MCF 10A (cell line): ENCODE measurements at regions of chr3 and their contacts with region 1.

Region 1: DNA sequence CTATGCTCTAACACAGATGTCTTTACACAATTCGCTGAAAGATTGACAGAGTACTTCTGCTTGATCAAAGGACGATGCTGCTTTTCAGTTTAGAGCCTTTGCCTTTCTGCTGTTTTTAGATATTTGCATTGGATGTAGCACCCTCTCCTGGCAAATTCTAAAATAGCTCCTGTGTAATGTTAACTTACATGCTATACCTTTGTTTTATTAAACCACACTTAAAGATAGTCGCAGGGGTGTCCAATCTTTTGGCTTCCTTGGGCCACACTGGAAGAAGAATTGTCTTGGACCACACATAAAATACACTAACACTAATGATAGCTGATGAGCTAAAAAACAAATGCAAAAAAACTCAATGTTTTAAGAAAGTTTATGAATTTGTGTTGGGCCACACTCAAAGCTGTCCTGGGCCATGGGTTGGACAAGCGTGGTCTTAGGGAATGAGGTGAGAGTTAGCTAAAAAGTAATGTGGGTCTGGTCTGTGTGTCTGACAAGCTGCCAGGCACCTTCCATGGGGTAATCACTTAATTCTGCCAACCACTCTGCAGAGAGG is 62.9 kb downstream of the ATG7 start:
- DNase-seq: peak; percentile 77
- H3K4me3 Mint-ChIP-seq: no peak overlapping the region
- H3K27ac Mint-ChIP-seq: no peak overlapping the region
- H3K4me1 Mint-ChIP-seq: no peaks in the 10 kb centered on the region
- H3K27me3 Mint-ChIP-seq: no peaks in the 10 kb centered on the region
- CTCF ChIP-seq: peak; percentile 55

Region 2: DNA sequence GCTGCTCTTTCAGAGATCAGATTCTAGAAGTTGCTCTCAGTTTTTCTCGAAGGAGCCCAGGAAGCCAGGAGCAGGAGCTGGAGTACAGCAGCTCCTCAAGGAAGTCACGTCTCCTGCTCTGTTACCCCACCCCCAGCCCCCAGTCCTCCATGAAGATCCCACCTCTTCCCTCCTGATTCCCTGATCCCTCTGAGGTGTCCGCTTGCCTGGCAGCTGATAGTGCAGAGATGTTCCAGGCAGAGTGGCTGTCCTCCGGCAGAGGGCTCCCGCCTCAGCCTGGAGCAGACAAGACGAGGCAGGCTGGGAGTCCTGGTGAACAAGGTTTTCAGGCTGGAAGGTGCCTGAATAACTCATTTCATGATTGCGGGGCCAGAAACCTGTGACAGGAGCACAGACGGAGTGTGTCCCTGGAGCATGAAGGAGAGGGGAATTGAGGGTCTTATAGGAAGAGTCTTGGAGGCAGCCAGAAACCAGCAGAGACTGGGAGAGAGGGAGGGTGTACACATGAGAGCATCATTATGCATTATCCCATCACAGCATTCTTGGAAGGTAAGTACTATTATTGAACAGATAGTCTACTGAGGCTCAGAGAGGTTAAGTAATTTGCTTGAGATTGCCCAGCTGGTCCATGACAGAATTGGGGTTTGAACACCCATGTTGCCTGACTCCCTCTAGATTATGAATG is 179.6 kb before region 1 on chr3:
- CTCF ChIA-PET with region 1: interaction called, 62 read pairs
- POLR2A ChIA-PET with region 1: interaction called, 3 read pairs
- intact Hi-C with region 1: loop called (anchors 1 kb)
- DNase-seq: peak; percentile 79
- H3K4me3 Mint-ChIP-seq: peak overlapping the region; percentile 48
- H3K27ac Mint-ChIP-seq: peak overlapping the region; percentile 9
- H3K4me1 Mint-ChIP-seq: peaks cover 22% of the 10 kb centered on the region
- H3K27me3 Mint-ChIP-seq: no peaks in the 10 kb centered on the region
- CTCF ChIP-seq: peak; percentile 46

Region 3: DNA sequence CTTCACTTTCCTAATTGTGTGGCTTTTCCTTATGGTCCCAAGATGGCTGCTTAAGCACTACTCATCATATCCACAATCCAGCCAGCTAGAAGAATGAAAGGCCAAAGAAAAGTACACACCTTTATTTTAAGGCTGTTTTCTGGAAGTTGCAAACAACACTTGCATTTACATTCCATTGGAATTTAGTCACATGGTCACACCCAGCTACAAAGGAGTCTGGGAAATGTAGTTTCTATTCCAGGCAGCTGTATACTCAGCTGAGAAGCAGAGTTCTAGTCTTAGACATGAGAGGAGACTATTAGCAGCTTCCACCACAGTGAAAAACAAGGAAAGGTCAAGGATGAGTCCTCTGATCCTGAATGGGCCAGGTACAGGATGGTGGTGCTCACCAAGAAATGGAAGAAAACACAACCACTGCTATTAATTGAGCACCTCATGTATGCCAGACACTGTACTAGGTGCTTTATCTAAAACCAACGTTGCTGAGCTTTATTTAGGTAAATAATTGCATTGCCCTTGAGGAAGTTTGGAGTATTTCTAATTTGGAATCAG is 90.9 kb before region 1 on chr3:
- CTCF ChIA-PET with region 1: interaction called, 10 read pairs
- POLR2A ChIA-PET with region 1: no interaction called
- intact Hi-C with region 1: no loop called
- DNase-seq: peak; percentile 38
- H3K4me3 Mint-ChIP-seq: no peak overlapping the region
- H3K27ac Mint-ChIP-seq: peak overlapping the region; percentile 63
- H3K4me1 Mint-ChIP-seq: peaks cover 11% of the 10 kb centered on the region
- H3K27me3 Mint-ChIP-seq: no peaks in the 10 kb centered on the region
- CTCF ChIP-seq: no peak

Region 4: GRCh38 chr3:11300970-11301369 is 34.2 kb before region 1 on chr3:
- CTCF ChIA-PET with region 1: interaction called, 11 read pairs
- POLR2A ChIA-PET with region 1: interaction called, 3 read pairs
- intact Hi-C with region 1: no loop called
- DNase-seq: no peak
- H3K4me3 Mint-ChIP-seq: no peak overlapping the region
- H3K27ac Mint-ChIP-seq: no peak overlapping the region
- H3K4me1 Mint-ChIP-seq: peaks cover 8% of the 10 kb centered on the region
- H3K27me3 Mint-ChIP-seq: no peaks in the 10 kb centered on the region
- CTCF ChIP-seq: no peak

Region 5: DNA sequence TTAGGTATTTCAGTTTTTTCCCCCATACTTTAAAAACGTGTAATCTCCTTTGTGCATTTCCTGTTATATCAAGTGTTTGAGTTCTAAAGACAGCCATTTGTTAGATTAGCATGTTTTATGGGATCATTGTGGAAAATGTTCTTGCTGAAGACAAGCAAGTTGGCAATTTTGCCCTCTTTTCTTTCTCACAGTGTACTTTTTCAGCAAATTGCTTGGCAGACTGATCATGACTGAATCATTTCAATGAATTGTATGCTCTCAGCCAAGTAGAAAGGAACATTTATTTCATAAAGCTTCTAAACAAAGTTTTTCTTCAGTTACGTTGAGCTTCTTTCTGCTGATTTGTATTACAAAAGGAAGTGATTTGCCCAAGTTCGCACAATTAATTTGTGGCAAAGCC is 11.3 kb before region 1 on chr3:
- CTCF ChIA-PET with region 1: interaction called, 39 read pairs
- POLR2A ChIA-PET with region 1: interaction called, 3 read pairs
- intact Hi-C with region 1: no loop called
- DNase-seq: no peak
- H3K4me3 Mint-ChIP-seq: no peak overlapping the region
- H3K27ac Mint-ChIP-seq: no peak overlapping the region
- H3K4me1 Mint-ChIP-seq: no peaks in the 10 kb centered on the region
- H3K27me3 Mint-ChIP-seq: no peaks in the 10 kb centered on the region
- CTCF ChIP-seq: no peak

Region 6: DNA sequence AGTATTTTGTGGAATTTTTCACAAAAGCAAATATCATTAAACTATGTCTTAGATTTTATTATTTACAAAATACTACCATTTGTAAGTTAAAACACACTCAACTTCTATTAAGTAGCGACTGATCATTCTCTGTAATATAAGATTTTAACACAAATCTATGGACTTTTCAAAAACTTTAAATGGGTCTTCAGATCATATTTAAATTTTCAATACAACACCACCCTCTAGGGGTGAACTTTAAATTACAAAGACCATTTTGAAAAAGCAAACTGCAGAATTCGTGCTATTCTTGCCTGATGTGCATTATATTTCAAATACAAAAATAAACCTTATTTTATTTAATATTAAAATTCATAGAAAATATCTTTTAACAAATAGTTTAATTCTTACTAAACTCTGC is 316.8 kb after region 1 on chr3:
- CTCF ChIA-PET with region 1: no interaction called
- POLR2A ChIA-PET with region 1: no interaction called
- intact Hi-C with region 1: loop called (anchors 5 kb)
- DNase-seq: peak; percentile 36
- H3K4me3 Mint-ChIP-seq: no peak overlapping the region
- H3K27ac Mint-ChIP-seq: no peak overlapping the region
- H3K4me1 Mint-ChIP-seq: no peaks in the 10 kb centered on the region
- H3K27me3 Mint-ChIP-seq: no peaks in the 10 kb centered on the region
- CTCF ChIP-seq: peak; percentile 46

Region 7: DNA sequence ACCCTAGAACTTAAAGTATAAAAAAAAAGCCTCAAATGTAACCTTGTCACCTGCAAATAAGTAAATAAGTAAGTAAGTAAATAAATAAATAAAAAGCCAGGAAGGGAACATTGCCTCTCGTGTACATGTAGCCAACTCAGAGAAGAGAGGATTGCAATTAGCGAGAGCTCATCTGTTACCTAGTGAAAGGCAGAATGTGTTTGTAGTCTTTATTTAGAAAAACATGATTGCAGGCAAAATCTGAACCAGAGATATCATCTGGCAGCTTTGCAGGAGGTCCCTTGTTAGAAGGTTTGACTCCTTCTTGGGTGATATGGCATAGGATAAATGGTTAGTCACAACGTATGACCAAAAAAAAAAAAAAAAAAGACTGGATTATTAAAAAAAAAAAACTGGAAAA is 597.5 kb after region 1 on chr3:
- CTCF ChIA-PET with region 1: no interaction called
- POLR2A ChIA-PET with region 1: no interaction called
- intact Hi-C with region 1: no loop called
- DNase-seq: no peak
- H3K4me3 Mint-ChIP-seq: no peak overlapping the region
- H3K27ac Mint-ChIP-seq: no peak overlapping the region
- H3K4me1 Mint-ChIP-seq: no peaks in the 10 kb centered on the region
- H3K27me3 Mint-ChIP-seq: peaks cover 23% of the 10 kb centered on the region
- CTCF ChIP-seq: no peak